H1 (cell line): ENCODE measurements at regions of chr5 and their contacts with region 1.

Region 1: GRCh38 chr5:157476702-157477408 is 16.8 kb downstream of the NIPAL4 start:
- DNase-seq: no peak
- H3K4me3 ChIP-seq: no peak overlapping the region
- H3K27ac ChIP-seq: no peak overlapping the region
- H3K4me1 ChIP-seq: peaks cover 0 to 2% (median 0%) of the 10 kb centered on the region in 4 experiments; a peak in 3 of 7 replicates
- H3K27me3 ChIP-seq: no peaks in the 10 kb centered on the region
- CTCF ChIP-seq: peak; percentile 48 to 89 (median 80)
- EP300 ChIP-seq: no peak
- POLR2A ChIP-seq: no peak
- RAD21 ChIP-seq: peak; percentile 86 to 87

Region 2: DNA sequence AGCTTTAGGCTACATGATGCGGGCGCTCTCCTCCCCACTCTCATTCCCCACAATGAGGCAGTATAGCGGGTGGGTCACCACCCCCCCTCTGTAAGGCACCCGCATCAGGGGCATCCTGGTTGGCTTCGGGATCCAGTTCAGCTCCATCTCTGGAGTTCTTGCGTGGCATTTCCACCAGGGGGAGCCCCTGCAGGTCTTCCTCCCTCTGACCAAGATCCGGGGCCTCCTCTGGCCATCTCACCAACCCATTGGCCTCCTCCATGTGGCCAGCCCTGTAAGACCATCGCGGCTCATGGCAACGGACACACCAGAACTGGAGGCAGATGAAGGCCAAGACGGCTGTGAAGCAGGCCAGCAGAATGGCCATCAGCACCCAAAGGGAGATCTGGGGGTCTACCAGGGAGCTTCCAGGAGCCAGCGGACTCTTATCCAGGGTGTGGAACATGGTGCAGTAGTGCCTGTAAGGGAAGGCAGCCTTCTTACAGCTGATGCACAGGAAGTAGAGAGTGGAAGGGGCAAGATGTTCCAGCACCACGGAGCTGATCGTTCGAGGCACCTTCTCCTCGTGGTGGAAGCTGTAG is 133.9 kb before region 1 on chr5:
- CTCF ChIA-PET with region 1: interaction called, 40 read pairs
- POLR2A ChIA-PET with region 1: no interaction called
- DNase-seq: peak in 1 of 2 experiments; percentile 82
- H3K4me3 ChIP-seq: no peak overlapping the region
- H3K27ac ChIP-seq: no peak overlapping the region
- H3K4me1 ChIP-seq: no peaks in the 10 kb centered on the region
- H3K27me3 ChIP-seq: no peaks in the 10 kb centered on the region
- CTCF ChIP-seq: peak; percentile 69 to 77 (median 72)
- EP300 ChIP-seq: no peak
- POLR2A ChIP-seq: no peak
- RAD21 ChIP-seq: peak; percentile 29 to 52; a peak in 3 of 4 replicates

Region 3: DNA sequence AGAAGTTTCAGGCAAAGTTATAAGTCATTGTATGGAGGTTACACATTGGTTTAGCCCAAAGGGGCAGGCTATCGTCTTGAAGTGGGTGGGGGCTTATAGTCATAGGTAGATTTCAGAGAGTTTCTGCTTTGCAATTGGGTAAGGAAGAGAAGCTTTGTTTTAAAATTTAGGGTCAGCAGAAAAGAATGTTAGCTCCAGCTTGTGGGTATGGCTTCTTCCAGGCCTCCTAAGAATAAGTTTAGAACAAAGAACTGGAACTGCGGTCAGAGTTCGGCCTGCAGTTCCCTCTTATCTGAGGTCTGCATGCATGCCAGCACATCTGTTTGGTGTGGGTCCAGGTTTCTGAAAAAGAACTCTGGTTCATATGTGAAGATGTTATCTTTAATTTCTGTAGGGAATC is 114.8 kb before region 1 on chr5:
- CTCF ChIA-PET with region 1: interaction called, 55 read pairs
- POLR2A ChIA-PET with region 1: no interaction called
- DNase-seq: no peak
- H3K4me3 ChIP-seq: no peak overlapping the region
- H3K27ac ChIP-seq: no peak overlapping the region
- H3K4me1 ChIP-seq: no peaks in the 10 kb centered on the region
- H3K27me3 ChIP-seq: no peaks in the 10 kb centered on the region; a peak in 1 of 7 replicates
- CTCF ChIP-seq: no peak
- EP300 ChIP-seq: no peak
- POLR2A ChIP-seq: no peak
- RAD21 ChIP-seq: no peak

Region 4: GRCh38 chr5:157431544-157432200 is 45.2 kb before region 1 on chr5:
- CTCF ChIA-PET with region 1: interaction called, 82 read pairs
- POLR2A ChIA-PET with region 1: no interaction called
- DNase-seq: no peak
- H3K4me3 ChIP-seq: no peak overlapping the region
- H3K27ac ChIP-seq: no peak overlapping the region
- H3K4me1 ChIP-seq: no peaks in the 10 kb centered on the region
- H3K27me3 ChIP-seq: no peaks in the 10 kb centered on the region
- CTCF ChIP-seq: peak in 2 of 3 experiments; percentile 40 to 50; a peak in 2 of 4 replicates
- EP300 ChIP-seq: no peak
- POLR2A ChIP-seq: no peak
- RAD21 ChIP-seq: peak; percentile 68 to 69

Region 5: GRCh38 chr5:157464519-157465171 is 12.2 kb before region 1 on chr5:
- CTCF ChIA-PET with region 1: interaction called, 112 read pairs
- POLR2A ChIA-PET with region 1: no interaction called
- DNase-seq: no peak
- H3K4me3 ChIP-seq: no peak overlapping the region
- H3K27ac ChIP-seq: no peak overlapping the region
- H3K4me1 ChIP-seq: peaks cover 0 to 4% (median under 1%) of the 10 kb centered on the region in 4 experiments; a peak in 3 of 7 replicates
- H3K27me3 ChIP-seq: peaks cover 9 to 25% (median 17%) of the 10 kb centered on the region in 4 experiments; a peak in 6 of 7 replicates
- CTCF ChIP-seq: no peak
- EP300 ChIP-seq: no peak
- POLR2A ChIP-seq: no peak
- RAD21 ChIP-seq: no peak

Region 6: GRCh38 chr5:157603333-157604190 is 126.7 kb after region 1 on chr5:
- CTCF ChIA-PET with region 1: no interaction called
- POLR2A ChIA-PET with region 1: no interaction called
- DNase-seq: no peak
- H3K4me3 ChIP-seq: no peak overlapping the region
- H3K27ac ChIP-seq: no peak overlapping the region
- H3K4me1 ChIP-seq: no peaks in the 10 kb centered on the region
- H3K27me3 ChIP-seq: no peaks in the 10 kb centered on the region
- CTCF ChIP-seq: no peak
- EP300 ChIP-seq: no peak
- POLR2A ChIP-seq: no peak
- RAD21 ChIP-seq: no peak